ENCODE measurements at regions of chr2 and their contacts with region 1.

Region 1: GRCh38 chr2:196076778-196077568 is 8.3 kb upstream of the DNAH7 start:
- DNase-seq: no peak
- ATAC-seq: peak; percentile 43
- H3K4me3 Mint-ChIP-seq: no peak overlapping the region
- H3K27ac Mint-ChIP-seq: no peak overlapping the region
- H3K4me1 Mint-ChIP-seq: peaks cover 19% of the 10 kb centered on the region
- H3K27me3 Mint-ChIP-seq: no peaks in the 10 kb centered on the region
- CTCF ChIP-seq: no peak

Region 2: DNA sequence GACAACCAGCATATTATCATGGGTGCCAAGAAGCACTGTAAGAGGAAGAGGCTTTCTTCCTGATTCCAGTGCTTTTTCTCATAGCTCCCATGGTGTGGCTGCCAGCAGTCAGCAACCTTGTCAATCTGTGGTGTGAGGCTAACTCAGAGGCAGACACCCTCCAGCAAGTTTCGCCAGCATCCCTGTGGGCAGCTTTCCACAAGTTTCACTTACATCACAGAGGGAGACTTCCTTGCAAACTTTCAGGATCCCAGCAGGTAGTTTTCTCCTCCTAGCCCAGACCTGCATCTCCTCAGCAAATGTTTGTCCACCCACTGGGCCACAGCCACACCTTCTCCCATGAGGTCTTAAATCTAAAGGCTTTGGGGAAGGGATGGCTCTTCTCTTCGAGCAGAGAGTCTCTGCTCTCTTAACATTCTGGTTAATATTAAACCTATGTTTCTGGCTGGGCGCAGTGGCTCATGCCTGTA is 17.4 kb before region 1 on chr2:
- CTCF ChIA-PET with region 1: no interaction called
- POLR2A ChIA-PET with region 1: no interaction called
- DNase-seq: peak; percentile 24
- ATAC-seq: peak; percentile 94
- H3K4me3 Mint-ChIP-seq: no peak overlapping the region
- H3K27ac Mint-ChIP-seq: peak overlapping the region; percentile 84
- H3K4me1 Mint-ChIP-seq: peaks cover 18% of the 10 kb centered on the region
- H3K27me3 Mint-ChIP-seq: no peaks in the 10 kb centered on the region; the same call in 1 of the 2 replicates
- CTCF ChIP-seq: no peak

Region 3: DNA sequence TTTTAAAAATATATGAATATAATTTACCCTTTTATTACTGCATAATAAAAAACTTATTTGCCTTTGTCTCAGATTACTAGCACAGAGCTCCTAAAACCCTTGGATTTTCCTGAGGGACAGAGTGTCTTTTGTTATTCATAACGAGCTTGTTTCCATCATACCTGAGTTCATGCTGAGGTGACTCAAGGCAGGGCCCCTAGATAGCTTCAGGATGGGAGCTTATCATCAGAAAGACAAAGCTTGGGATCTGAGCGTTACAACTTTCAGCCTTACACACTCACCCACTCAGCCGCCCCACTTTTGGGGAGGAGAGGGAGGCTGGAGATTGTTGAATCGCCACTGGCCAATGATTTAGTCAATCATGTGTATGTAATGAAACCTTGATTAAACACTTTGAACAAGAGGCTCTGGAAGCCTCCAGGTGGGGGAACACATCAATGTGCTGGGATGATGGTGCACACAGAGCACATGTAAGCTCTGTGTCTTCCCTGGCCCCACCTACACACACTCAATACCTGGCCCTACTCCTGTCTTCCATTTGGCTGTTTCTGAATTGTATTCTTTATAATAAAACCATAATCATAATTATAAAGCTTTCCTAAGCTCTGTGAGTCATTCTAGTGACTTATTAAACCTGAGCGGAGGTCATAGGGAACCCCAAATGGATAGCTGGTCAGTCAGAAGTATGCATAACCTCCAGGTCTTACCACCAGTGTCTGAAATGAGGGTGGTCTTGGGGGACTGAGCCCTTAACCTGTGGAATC is 20.2 kb after region 1 on chr2:
- CTCF ChIA-PET with region 1: interaction called, 21 read pairs
- POLR2A ChIA-PET with region 1: no interaction called
- DNase-seq: no peak
- ATAC-seq: peak; percentile 90
- H3K4me3 Mint-ChIP-seq: no peak overlapping the region
- H3K27ac Mint-ChIP-seq: peak overlapping the region; percentile 86
- H3K4me1 Mint-ChIP-seq: peaks cover 56% of the 10 kb centered on the region
- H3K27me3 Mint-ChIP-seq: no peaks in the 10 kb centered on the region; the same call in 1 of the 2 replicates
- CTCF ChIP-seq: no peak

Region 4: GRCh38 chr2:196171248-196171871 is 94.4 kb after region 1 on chr2 and contains the start of gene STK17B:
- CTCF ChIA-PET with region 1: interaction called, 11 read pairs
- POLR2A ChIA-PET with region 1: no interaction called
- DNase-seq: peak; percentile 94
- ATAC-seq: peak; percentile 85
- H3K4me3 Mint-ChIP-seq: peak within 1 kb of the TSS; percentile 88
- H3K27ac Mint-ChIP-seq: peak within 1 kb of the TSS; percentile 78; the same call in 1 of the 2 replicates
- H3K4me1 Mint-ChIP-seq: peaks cover 39% of the 10 kb centered on the region
- H3K27me3 Mint-ChIP-seq: peaks cover 20% of the 10 kb centered on the region
- CTCF ChIP-seq: no peak
- total RNA-seq, gene STK17B: 11.2 to 11.8 TPM (median 11.7 TPM) in 3 replicates

Region 5: GRCh38 chr2:196277002-196277401 is 200.0 kb after region 1 on chr2:
- CTCF ChIA-PET with region 1: interaction called, 19 read pairs
- POLR2A ChIA-PET with region 1: no interaction called
- DNase-seq: no peak
- ATAC-seq: no peak; the same call in 1 of the 2 replicates
- H3K4me3 Mint-ChIP-seq: no peak overlapping the region
- H3K27ac Mint-ChIP-seq: no peak overlapping the region
- H3K4me1 Mint-ChIP-seq: peaks cover 8% of the 10 kb centered on the region
- H3K27me3 Mint-ChIP-seq: no peaks in the 10 kb centered on the region
- CTCF ChIP-seq: no peak

Region 6: GRCh38 chr2:196337208-196337953 is 260.4 kb after region 1 on chr2:
- CTCF ChIA-PET with region 1: interaction called, 47 read pairs
- POLR2A ChIA-PET with region 1: no interaction called
- DNase-seq: no peak
- ATAC-seq: peak; percentile 73
- H3K4me3 Mint-ChIP-seq: no peak overlapping the region
- H3K27ac Mint-ChIP-seq: no peak overlapping the region
- H3K4me1 Mint-ChIP-seq: no peaks in the 10 kb centered on the region; the same call in 1 of the 2 replicates
- H3K27me3 Mint-ChIP-seq: no peaks in the 10 kb centered on the region
- CTCF ChIP-seq: peak; percentile 34; the same call in 1 of the 2 replicates

Region 7: GRCh38 chr2:196453613-196454047 is 376.7 kb after region 1 on chr2:
- CTCF ChIA-PET with region 1: interaction called, 16 read pairs
- POLR2A ChIA-PET with region 1: no interaction called
- DNase-seq: peak; percentile 33
- ATAC-seq: peak; percentile 89
- H3K4me3 Mint-ChIP-seq: no peak overlapping the region
- H3K27ac Mint-ChIP-seq: no peak overlapping the region
- H3K4me1 Mint-ChIP-seq: 0 out of 2 replicates have a peak, but pooled peaks cover 2% of the 10 kb centered on the region
- H3K27me3 Mint-ChIP-seq: no peaks in the 10 kb centered on the region
- CTCF ChIP-seq: no peak; the same call in 1 of the 2 replicates

Measured in WTC11 (cell line).